Cardiac septum (tissue), 1 donor: ENCODE measurements at regions of chr3 and their contacts with region 1.

Region 1: GRCh38 chr3:20340324-20340928 is 154.4 kb upstream of the SGO1 start:
- DNase-seq: peak; percentile 76

Region 2: GRCh38 chr3:20503394-20504082 is 163.1 kb after region 1 on chr3:
- intact Hi-C with region 1: no loop called
- DNase-seq: no peak

Region 3: GRCh38 chr3:20739814-20740213 is 399.4 kb after region 1 on chr3:
- intact Hi-C with region 1: loop called (anchors 5 kb)
- DNase-seq: no peak

Region 4: DNA sequence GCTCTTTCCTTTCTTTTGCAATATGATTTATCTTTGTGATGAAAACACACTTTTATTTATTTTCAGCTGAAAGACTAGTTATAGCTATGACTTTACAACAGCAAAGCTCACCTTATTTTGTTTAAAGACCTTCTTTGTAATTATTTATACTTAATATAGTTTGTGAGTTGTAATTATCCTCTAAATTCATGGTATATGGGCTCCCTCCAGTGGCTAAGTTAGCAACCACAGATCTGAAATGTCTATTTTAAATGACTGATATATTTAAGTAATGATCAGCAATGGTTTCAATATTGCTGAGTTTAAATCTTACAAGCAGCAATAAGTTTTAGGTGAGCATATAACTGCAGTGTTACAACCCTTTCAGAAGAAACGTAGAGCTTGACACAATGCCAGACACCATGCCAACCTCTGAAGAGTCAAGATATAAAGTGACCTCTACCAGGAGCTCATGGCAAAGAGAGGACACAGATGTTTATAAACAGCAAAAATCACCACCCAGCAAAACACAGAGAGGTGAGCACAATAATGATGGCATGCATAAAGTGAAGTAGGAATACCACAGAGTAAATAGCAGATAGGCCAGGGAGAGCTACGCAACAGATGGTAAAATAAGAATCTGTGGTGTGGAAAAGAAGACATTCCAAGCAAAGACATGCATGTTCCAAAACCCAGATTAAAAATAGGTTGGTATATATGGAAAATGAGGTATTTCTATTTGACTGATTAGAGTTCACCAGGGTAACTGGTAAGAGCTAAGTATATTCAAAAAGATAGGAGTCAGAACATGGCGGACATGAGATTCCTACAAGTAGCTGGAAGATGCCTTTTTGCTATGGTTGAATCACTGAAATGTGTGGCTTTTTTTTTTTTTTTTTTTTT is 1554.3 kb after region 1 on chr3:
- intact Hi-C with region 1: loop called (anchors 10 kb)
- DNase-seq: no peak

Region 5: GRCh38 chr3:22117751-22118346 is 1777.4 kb after region 1 on chr3:
- intact Hi-C with region 1: loop called (anchors 10 kb)
- DNase-seq: no peak